ENCODE measurements at regions of chr15 and their contacts with region 1.

Region 1: GRCh38 chr15:76973362-76973743 is 21.6 kb upstream of the PSTPIP1 start:
- DNase-seq: peak; percentile 81
- ATAC-seq: peak; percentile 61
- H3K4me3 Mint-ChIP-seq: no peak overlapping the region
- H3K27ac Mint-ChIP-seq: peak overlapping the region; percentile 61
- H3K4me1 Mint-ChIP-seq: peaks cover 37% of the 10 kb centered on the region
- H3K27me3 Mint-ChIP-seq: no peaks in the 10 kb centered on the region

Region 2: DNA sequence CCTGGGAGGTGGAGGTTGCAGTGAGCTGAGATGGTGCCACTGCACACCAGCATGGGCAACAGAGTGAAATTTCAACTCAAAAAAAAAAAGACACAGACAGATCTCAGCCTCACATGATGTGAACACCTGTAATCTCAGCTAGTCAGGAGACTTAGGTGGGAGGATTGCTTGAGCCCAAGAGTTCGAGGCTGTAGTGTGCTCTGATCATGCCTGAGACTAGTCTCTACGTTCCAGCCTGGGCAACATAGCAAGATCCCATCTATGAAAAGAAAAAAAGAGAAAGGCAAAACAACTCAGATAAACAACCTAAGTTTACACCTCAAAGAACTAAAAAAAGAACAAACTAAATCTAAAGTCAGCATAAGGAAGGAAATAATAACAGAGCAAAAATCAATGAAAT is 79.2 kb before region 1 on chr15:
- CTCF ChIA-PET with region 1: no interaction called
- POLR2A ChIA-PET with region 1: no interaction called
- DNase-seq: no peak
- ATAC-seq: no peak
- H3K4me3 Mint-ChIP-seq: no peak overlapping the region
- H3K27ac Mint-ChIP-seq: no peak overlapping the region
- H3K4me1 Mint-ChIP-seq: no peaks in the 10 kb centered on the region
- H3K27me3 Mint-ChIP-seq: no peaks in the 10 kb centered on the region

Region 3: GRCh38 chr15:76954744-76955143 is 18.6 kb before region 1 on chr15:
- CTCF ChIA-PET with region 1: interaction called, 16 read pairs
- POLR2A ChIA-PET with region 1: no interaction called
- DNase-seq: no peak
- ATAC-seq: no peak
- H3K4me3 Mint-ChIP-seq: no peak overlapping the region
- H3K27ac Mint-ChIP-seq: no peak overlapping the region
- H3K4me1 Mint-ChIP-seq: peaks cover 15% of the 10 kb centered on the region
- H3K27me3 Mint-ChIP-seq: no peaks in the 10 kb centered on the region

Region 4: GRCh38 chr15:77002954-77003912 is 29.9 kb after region 1 on chr15:
- CTCF ChIA-PET with region 1: interaction called, 82 read pairs
- POLR2A ChIA-PET with region 1: interaction called, 4 read pairs
- DNase-seq: peak; percentile 88
- ATAC-seq: peak; percentile 76
- H3K4me3 Mint-ChIP-seq: peak overlapping the region; percentile 76
- H3K27ac Mint-ChIP-seq: peak overlapping the region; percentile 95
- H3K4me1 Mint-ChIP-seq: peaks cover 95% of the 10 kb centered on the region
- H3K27me3 Mint-ChIP-seq: no peaks in the 10 kb centered on the region

Region 5: GRCh38 chr15:77044228-77045042 is 71.1 kb after region 1 on chr15:
- CTCF ChIA-PET with region 1: interaction called, 13 read pairs
- POLR2A ChIA-PET with region 1: no interaction called
- DNase-seq: peak; percentile 19
- ATAC-seq: no peak
- H3K4me3 Mint-ChIP-seq: no peak overlapping the region
- H3K27ac Mint-ChIP-seq: no peak overlapping the region
- H3K4me1 Mint-ChIP-seq: no peaks in the 10 kb centered on the region
- H3K27me3 Mint-ChIP-seq: no peaks in the 10 kb centered on the region

Region 6: DNA sequence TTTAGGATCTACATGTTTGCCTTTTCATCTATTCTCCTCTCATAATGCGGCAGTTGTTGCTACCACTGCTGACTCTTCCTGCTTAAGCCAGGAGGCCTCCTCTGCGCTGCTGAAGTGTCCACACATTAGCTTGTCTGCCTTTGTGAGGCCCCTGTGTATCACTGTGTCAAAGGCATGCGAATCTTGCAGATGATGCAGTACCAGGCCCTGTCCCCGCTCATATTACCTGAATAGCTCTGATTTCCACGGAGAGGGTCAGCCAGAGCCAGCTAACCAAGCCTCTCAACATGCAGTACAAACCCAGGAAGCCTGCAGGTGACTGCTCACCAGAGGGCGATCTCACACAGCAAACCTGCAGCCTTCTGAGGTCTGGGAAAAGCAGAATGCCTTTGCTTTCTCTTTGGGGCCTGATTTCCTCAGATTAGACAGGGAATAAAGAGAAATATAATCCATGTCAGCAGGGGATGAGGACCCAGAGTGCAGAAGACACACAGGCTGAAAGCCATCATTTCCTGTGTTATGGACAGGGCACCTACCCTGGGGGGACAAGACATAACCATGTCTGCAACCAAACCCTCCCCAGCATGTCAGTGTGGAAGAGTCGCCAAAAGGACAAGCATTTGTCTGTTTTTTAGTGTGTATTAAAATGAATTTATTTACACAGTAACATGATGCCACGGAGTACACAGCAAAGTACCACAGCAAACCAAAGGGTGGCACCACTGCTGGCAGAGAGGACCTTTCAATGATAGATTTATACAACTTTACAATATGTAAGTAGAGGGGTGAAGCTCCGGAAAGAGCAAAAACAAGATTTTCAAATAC is 134.4 kb after region 1 on chr15:
- CTCF ChIA-PET with region 1: interaction called, 31 read pairs
- POLR2A ChIA-PET with region 1: no interaction called
- DNase-seq: peak; percentile 67
- ATAC-seq: peak; percentile 65
- H3K4me3 Mint-ChIP-seq: no peak overlapping the region
- H3K27ac Mint-ChIP-seq: no peak overlapping the region
- H3K4me1 Mint-ChIP-seq: peaks cover 2% of the 10 kb centered on the region
- H3K27me3 Mint-ChIP-seq: no peaks in the 10 kb centered on the region

Region 7: GRCh38 chr15:77543159-77543882 is 570.0 kb after region 1 on chr15:
- CTCF ChIA-PET with region 1: interaction called, 20 read pairs
- POLR2A ChIA-PET with region 1: no interaction called
- DNase-seq: peak; percentile 82
- ATAC-seq: peak; percentile 96
- H3K4me3 Mint-ChIP-seq: peak overlapping the region; percentile 77
- H3K27ac Mint-ChIP-seq: peak overlapping the region; percentile 57
- H3K4me1 Mint-ChIP-seq: peaks cover 11% of the 10 kb centered on the region
- H3K27me3 Mint-ChIP-seq: no peaks in the 10 kb centered on the region

Measured in activated CD8-positive, alpha-beta T cell treated with anti-CD3 and anti-CD28 coated beads, Interleukin-2, amount 10 ng/mL, durations not matched to agents 7 days and 5 days (primary cell).